Activated CD4-positive, alpha-beta T cell treated with anti-CD3 and anti-CD28 coated beads for 36 hours (primary cell): ENCODE measurements at regions of chr17 and their contacts with region 1.

Region 1: DNA sequence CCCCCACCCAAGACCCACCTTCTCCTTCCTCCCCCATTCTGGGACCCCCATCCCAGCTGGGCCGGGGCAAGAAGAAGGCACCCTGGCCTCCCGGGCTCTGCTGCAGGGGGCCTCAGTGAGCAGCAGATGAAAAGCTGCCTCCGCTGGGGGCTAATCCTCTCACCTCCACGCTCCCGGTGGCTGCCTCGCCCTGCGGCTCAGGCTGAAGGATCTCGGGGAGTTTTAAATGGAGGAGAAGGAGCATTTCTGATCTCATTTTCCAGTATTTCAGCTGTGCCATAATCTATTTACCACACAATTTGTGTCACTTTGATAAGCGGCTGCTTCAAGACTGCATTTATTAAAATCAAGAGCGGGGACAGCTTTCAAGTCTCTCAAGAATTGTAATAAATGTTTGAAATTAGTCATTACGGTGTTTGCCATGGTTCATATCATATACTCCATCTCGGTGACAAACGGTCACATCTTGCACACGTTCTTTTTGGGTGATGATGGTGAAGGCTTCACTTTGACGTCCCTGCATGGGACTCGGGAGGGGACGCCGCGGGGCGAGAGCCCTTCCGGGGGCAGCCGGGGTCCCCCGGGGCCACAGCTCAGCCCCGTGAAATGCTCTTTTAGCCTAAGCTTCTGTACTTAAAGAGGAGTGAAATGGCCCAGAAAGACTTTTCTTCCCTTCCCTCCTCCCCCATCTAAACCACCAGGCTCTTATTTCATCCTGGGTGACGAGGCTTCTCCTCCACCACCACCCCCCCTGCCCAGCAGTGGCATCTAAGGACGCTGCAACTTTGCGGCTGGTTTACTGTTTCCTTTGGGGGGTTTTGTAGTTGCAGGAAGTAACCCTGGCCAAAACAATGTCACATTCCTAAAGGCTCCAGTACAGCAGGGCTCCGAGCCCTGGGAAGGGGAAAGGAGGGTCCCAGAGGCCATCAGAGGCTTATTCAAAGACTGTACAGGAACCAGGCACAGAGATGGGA is 313.1 kb upstream of the TNRC6C start:
- DNase-seq: peak; percentile 81
- ATAC-seq: peak; percentile 85
- H3K4me3 Mint-ChIP-seq: peak overlapping the region; percentile 59
- H3K27ac Mint-ChIP-seq: peak overlapping the region; percentile 92
- H3K4me1 Mint-ChIP-seq: peaks cover 20% of the 10 kb centered on the region
- H3K27me3 Mint-ChIP-seq: peaks cover 4% of the 10 kb centered on the region

Region 2: DNA sequence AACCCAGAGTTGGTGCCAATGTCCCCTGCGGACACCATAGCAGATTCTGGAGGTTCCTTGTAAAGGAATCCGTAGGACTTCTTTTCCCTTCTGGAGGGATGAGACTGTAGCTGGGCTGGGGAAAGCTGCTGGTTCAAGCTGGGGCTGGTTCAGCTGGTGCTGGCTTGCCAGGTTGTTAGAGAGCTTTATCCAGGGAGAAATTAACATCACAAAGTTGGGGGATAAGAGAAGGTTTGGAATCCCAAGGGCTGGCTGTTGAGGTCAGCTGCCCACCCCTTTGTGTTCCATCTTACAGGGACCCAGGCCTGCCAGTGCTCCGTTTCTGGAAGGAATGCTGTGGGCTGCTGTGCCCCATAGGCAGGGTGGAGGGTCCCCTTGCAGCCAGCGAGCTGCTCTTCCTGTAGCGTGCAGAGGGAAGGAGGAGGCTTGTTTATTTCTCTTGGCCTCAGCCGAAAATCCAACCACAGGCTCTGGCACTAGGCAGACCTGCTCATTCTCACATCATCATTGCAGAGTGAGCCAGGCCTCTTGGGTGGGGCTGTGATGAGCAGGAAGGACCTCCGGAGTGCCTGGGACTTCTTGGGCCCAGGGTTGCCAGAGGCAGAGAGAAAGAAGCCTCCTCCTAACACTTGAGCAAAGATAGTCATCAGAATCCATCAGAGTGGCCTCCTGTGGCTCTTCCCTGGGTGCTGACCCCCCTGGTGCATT is 253.5 kb before region 1 on chr17:
- CTCF ChIA-PET with region 1: no interaction called
- POLR2A ChIA-PET with region 1: no interaction called
- intact Hi-C with region 1: loop called in 1 of 2 experiments (anchors 10 kb)
- DNase-seq: peak; percentile 67
- ATAC-seq: peak; percentile 34
- H3K4me3 Mint-ChIP-seq: peak overlapping the region; percentile 78
- H3K27ac Mint-ChIP-seq: peak overlapping the region; percentile 58
- H3K4me1 Mint-ChIP-seq: peaks cover 71% of the 10 kb centered on the region
- H3K27me3 Mint-ChIP-seq: no peaks in the 10 kb centered on the region

Region 3: GRCh38 chr17:77609553-77610517 is 35.5 kb before region 1 on chr17:
- CTCF ChIA-PET with region 1: no interaction called
- POLR2A ChIA-PET with region 1: no interaction called
- intact Hi-C with region 1: loop called in 1 of 2 experiments (anchors 1 kb)
- DNase-seq: peak; percentile 81
- ATAC-seq: peak; percentile 99
- H3K4me3 Mint-ChIP-seq: peak overlapping the region; percentile 55
- H3K27ac Mint-ChIP-seq: peak overlapping the region; percentile 88
- H3K4me1 Mint-ChIP-seq: peaks cover 28% of the 10 kb centered on the region
- H3K27me3 Mint-ChIP-seq: no peaks in the 10 kb centered on the region

Region 4: GRCh38 chr17:77666881-77667395 is 21.6 kb after region 1 on chr17:
- CTCF ChIA-PET with region 1: interaction called, 5 read pairs
- POLR2A ChIA-PET with region 1: interaction called, 4 read pairs
- intact Hi-C with region 1: loop called (anchors 1 to 2 kb)
- DNase-seq: peak; percentile 84
- ATAC-seq: peak; percentile 86
- H3K4me3 Mint-ChIP-seq: peak overlapping the region; percentile 75
- H3K27ac Mint-ChIP-seq: peak overlapping the region; percentile 100
- H3K4me1 Mint-ChIP-seq: peaks cover 32% of the 10 kb centered on the region
- H3K27me3 Mint-ChIP-seq: no peaks in the 10 kb centered on the region

Region 5: DNA sequence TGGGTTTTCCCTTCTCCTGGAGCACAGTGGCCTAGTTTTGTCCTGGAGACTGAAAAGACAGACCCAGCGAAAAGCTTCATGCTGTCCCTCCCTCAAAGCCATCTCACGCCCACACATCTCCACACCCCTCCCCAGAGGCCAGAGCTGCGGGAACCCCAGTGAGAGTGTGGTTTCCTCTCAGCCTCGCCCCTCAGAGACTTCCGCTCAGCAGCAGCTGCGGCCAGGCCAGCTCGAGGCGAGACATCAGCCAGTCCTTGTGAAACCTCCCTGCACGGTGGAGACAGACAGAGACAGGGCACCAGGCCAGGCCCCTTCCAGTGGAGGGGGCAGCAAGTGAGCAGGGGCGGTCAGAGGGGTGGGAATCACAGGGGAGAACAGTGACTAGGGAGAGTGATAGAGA is 236.2 kb after region 1 on chr17:
- CTCF ChIA-PET with region 1: no interaction called
- POLR2A ChIA-PET with region 1: no interaction called
- intact Hi-C with region 1: loop called in 1 of 2 experiments (anchors 5 kb)
- DNase-seq: peak; percentile 78
- ATAC-seq: peak; percentile 40
- H3K4me3 Mint-ChIP-seq: peak overlapping the region; percentile 43
- H3K27ac Mint-ChIP-seq: peak overlapping the region; percentile 90
- H3K4me1 Mint-ChIP-seq: peaks cover 77% of the 10 kb centered on the region
- H3K27me3 Mint-ChIP-seq: no peaks in the 10 kb centered on the region